ENCODE measurements at regions of chr12 and their contacts with region 1.

Region 1: GRCh38 chr12:29957835-29958234 is 174.1 kb upstream of the TMTC1 start:
- DNase-seq: no peak
- ATAC-seq: no peak
- H3K4me3 ChIP-seq: no peak overlapping the region
- H3K27ac ChIP-seq: no peak overlapping the region
- H3K4me1 ChIP-seq: no peaks in the 10 kb centered on the region
- H3K27me3 ChIP-seq: no peaks in the 10 kb centered on the region
- CTCF ChIP-seq: no peak
- POLR2A ChIP-seq: no peak
- RAD21 ChIP-seq: no peak

Region 2: GRCh38 chr12:29943683-29944082 is 14.2 kb before region 1 on chr12:
- CTCF ChIA-PET with region 1: no interaction called
- POLR2A ChIA-PET with region 1: no interaction called
- RAD21 ChIA-PET with region 1: no interaction called
- intact Hi-C with region 1: loop called (anchors 2 kb)
- DNase-seq: no peak
- ATAC-seq: no peak
- H3K4me3 ChIP-seq: no peak overlapping the region
- H3K27ac ChIP-seq: no peak overlapping the region
- H3K4me1 ChIP-seq: no peaks in the 10 kb centered on the region
- H3K27me3 ChIP-seq: no peaks in the 10 kb centered on the region
- CTCF ChIP-seq: no peak
- POLR2A ChIP-seq: no peak
- RAD21 ChIP-seq: no peak

Region 3: DNA sequence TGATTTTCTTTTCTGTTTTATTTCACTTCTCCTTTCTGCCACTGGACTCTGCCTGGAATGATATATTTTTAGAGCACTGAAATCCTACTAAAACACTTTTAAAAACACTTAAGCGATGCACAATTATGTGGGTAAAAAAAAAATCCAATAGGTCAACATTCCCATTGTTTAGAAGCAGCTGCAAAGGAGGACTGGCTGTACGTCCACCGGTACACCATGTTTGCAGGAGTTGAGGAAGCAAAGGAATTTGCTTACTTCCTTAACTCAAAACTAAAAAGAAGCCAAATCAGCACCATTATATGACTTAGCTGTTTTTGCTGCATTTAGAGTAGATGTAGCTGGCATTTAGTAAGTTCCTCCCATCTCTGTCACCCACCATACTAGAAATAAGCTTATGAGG is 12.7 kb after region 1 on chr12:
- CTCF ChIA-PET with region 1: no interaction called
- POLR2A ChIA-PET with region 1: no interaction called
- RAD21 ChIA-PET with region 1: no interaction called
- intact Hi-C with region 1: no loop called
- DNase-seq: no peak
- ATAC-seq: no peak
- H3K4me3 ChIP-seq: no peak overlapping the region
- H3K27ac ChIP-seq: no peak overlapping the region
- H3K4me1 ChIP-seq: no peaks in the 10 kb centered on the region
- H3K27me3 ChIP-seq: no peaks in the 10 kb centered on the region
- CTCF ChIP-seq: no peak
- POLR2A ChIP-seq: no peak
- RAD21 ChIP-seq: no peak

Region 4: GRCh38 chr12:30082381-30082780 is 124.5 kb after region 1 on chr12:
- CTCF ChIA-PET with region 1: no interaction called
- POLR2A ChIA-PET with region 1: no interaction called
- RAD21 ChIA-PET with region 1: no interaction called
- intact Hi-C with region 1: no loop called
- DNase-seq: no peak
- ATAC-seq: no peak
- H3K4me3 ChIP-seq: no peak overlapping the region
- H3K27ac ChIP-seq: no peak overlapping the region
- H3K4me1 ChIP-seq: no peaks in the 10 kb centered on the region
- H3K27me3 ChIP-seq: no peaks in the 10 kb centered on the region; the same call in 1 of the 2 replicates
- CTCF ChIP-seq: no peak
- POLR2A ChIP-seq: no peak
- RAD21 ChIP-seq: no peak

Measured in HCT116 (cell line).